Left colon (tissue), 2 donors: ENCODE measurements at regions of chr7 and their contacts with region 1.

Region 1: GRCh38 chr7:32204361-32205018 is 134.3 kb upstream of the PDE1C start:
- DNase-seq: peak; percentile 28 to 43
- ATAC-seq: peak; percentile 80

Region 2: GRCh38 chr7:31744294-31744874 is 460.1 kb before region 1 on chr7:
- intact Hi-C with region 1: loop called (anchors 2 to 10 kb)
- DNase-seq: peak; percentile 29 to 67
- ATAC-seq: peak; percentile 74

Region 3: DNA sequence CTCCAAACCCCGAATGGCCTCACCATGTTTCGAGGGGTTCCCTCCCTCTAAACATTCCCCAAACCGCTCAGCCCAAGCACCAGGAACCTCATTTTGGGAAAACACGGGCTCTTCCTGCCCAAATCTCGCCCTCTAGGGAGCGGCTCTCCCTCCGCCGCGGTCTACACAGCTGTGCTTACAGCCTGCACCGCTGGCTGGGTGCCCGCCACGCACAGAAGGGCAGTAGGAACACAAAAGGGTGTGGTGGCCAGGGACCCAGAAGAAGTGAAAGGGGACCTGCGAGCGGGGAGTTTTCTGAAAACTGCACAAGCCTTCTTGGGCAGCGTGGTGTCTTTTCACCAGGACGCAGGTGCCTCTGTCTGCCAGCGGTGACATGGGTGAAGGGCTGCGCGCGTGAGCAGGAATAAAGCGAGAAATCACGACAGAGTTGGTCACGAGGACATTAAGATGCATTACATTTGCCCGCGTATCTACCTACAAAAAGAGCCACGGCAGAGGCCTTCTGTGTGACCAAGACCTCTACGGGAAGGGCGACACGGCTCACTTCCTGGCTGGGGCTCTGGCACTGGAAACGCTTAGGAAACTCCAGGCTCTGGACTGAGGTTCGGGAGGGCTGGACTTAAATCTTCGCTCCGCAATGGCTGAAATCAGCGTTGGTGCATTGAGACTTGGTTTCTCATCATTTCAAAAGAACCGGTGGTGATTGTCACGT is 114.0 kb after region 1 on chr7:
- intact Hi-C with region 1: no loop called
- DNase-seq: no peak
- ATAC-seq: no peak

Region 4: DNA sequence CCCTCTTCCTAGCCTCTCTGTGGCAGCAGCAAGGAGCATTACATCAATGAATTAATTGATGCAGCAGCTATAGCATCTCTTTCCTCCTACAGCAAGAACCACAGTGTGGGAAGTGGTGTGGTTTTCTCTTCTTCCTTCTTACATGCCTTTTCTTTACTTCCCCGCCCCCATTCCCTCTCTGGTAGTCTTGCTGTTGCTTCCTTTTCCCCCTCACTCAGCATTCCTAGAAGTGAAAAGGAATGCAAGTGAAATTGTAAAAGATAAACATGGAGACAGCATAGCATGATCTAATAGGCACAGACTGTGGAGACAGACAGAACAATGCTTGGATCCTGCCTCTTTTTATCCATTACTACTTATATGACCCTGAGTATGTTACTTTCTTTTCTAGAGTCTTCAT is 1330.3 kb after region 1 on chr7:
- intact Hi-C with region 1: no loop called
- DNase-seq: no peak
- ATAC-seq: no peak